BJ (cell line): ENCODE measurements at regions of chr2 and their contacts with region 1.

Region 1: GRCh38 chr2:191555092-191555742 is 122.7 kb upstream of the NABP1 start:
- DNase-seq: no peak
- H3K4me3 ChIP-seq: no peak overlapping the region
- H3K27me3 ChIP-seq: no peaks in the 10 kb centered on the region; the same call in 1 of the 2 replicates
- CTCF ChIP-seq: peak; percentile 71

Region 2: DNA sequence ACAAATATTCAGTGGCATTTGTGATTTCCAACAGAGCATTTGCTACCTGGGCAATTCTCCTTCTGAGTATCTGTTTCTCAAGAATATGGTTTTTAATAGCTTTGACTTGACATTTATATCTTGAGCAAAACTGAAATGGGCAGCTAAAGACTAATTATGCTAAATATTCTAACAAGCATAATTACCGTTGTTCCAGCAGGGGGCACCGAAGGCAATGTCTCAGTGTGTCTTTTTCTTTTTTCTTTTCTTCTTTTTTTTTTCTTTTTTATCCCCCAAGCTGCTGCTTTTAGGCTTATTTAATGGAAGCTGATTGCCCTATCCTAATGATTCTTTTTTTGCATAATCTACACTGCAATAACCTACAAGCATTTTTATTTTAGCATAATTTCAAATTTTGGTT is 16.1 kb before region 1 on chr2:
- CTCF ChIA-PET with region 1: interaction called, 20 read pairs
- POLR2A ChIA-PET with region 1: interaction called, 3 read pairs
- DNase-seq: no peak
- H3K4me3 ChIP-seq: no peak overlapping the region
- H3K27me3 ChIP-seq: peaks cover 1% of the 10 kb centered on the region
- CTCF ChIP-seq: peak; percentile 68

Region 3: GRCh38 chr2:191566344-191566743 is 11.1 kb after region 1 on chr2:
- CTCF ChIA-PET with region 1: interaction called, 10 read pairs
- POLR2A ChIA-PET with region 1: no interaction called
- DNase-seq: no peak
- H3K4me3 ChIP-seq: no peak overlapping the region
- H3K27me3 ChIP-seq: no peaks in the 10 kb centered on the region
- CTCF ChIP-seq: peak; percentile 87

Region 4: GRCh38 chr2:192162392-192163042 is 607.3 kb after region 1 on chr2:
- CTCF ChIA-PET with region 1: interaction called, 66 read pairs
- POLR2A ChIA-PET with region 1: no interaction called
- DNase-seq: peak; percentile 21
- H3K4me3 ChIP-seq: no peak overlapping the region
- H3K27me3 ChIP-seq: peaks cover 1% of the 10 kb centered on the region; the same call in 1 of the 2 replicates
- CTCF ChIP-seq: peak; percentile 86